WTC11 (cell line): ENCODE measurements at regions of chrX and their contacts with region 1.

Region 1: DNA sequence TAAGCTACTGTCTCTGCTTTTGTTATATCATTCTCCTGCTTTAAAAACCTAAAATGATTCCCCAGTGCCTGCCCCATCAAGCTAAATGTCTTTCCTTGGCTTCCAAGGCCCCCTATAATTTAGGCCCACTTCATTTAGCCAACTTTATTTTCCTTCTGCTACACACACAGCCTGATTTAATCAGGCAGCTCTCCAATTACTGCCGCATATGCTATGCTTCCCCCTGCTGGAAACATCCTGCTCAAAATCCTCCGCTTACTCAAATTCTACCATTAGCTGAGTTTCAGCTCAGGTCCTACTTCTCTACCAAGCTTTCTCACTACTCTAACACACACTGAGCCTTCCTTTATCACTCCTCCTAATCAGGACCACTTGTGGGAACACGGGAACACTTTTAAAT is 17.0 kb downstream of the LAMP2 start:
- DNase-seq: peak; percentile 13
- ATAC-seq: peak; percentile 80
- H3K4me3 Mint-ChIP-seq: no peak overlapping the region
- H3K27ac Mint-ChIP-seq: peak overlapping the region; percentile 82
- H3K4me1 Mint-ChIP-seq: peaks cover 5% of the 10 kb centered on the region
- H3K27me3 Mint-ChIP-seq: no peaks in the 10 kb centered on the region
- CTCF ChIP-seq: no peak

Region 2: DNA sequence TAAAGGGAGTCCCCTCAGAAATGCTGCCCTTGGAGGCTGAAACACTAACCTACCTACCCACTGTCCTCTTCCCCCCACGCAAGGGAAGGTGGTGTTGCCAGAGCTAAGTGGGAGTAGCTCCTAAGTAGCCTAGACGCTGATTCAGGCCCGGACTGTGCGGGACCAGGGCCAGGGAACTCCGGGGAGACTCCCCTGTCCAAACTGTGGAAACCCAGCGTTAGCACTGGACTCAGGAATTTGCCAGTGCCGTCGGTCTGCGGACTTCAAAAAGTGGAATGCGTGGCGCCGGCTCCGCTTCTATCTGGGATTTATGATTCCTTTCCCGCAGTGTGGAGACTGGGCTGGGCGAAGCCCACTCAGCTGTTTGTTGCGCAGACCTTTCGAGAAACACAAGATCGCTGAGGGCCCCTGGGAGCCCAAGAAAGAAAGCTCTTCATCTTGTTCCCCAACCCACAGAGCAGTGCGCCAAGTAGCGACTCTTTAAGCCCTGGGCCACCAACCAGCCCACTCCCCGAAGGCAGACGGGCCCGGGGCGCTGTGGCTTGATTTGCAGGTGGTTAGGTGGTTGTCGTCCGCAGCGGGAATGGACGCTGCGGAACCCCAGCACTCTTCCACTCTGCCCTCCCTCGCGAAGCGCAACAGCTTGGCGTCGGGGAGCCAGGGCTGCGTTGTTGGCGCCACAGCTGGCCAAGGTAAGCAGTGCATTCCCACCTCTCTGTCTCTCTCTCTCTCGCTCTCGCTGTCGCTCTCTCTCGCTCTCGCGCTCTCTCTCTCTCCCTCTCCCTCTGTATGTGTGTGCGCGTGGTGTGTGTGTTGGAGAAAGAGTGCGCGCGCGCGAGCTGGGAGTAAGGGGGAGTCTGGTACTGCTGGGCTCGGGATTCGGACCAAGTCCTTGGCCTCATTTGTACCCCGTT is 142.9 kb before region 1 on chrX:
- CTCF ChIA-PET with region 1: interaction called, 38 read pairs
- POLR2A ChIA-PET with region 1: no interaction called
- DNase-seq: peak; percentile 67
- ATAC-seq: peak; percentile 76
- H3K4me3 Mint-ChIP-seq: peak overlapping the region; percentile 74
- H3K27ac Mint-ChIP-seq: no peak overlapping the region
- H3K4me1 Mint-ChIP-seq: peaks cover 44% of the 10 kb centered on the region
- H3K27me3 Mint-ChIP-seq: peaks cover 98% of the 10 kb centered on the region
- CTCF ChIP-seq: 0 out of 2 replicates have a peak, but pooled peaks have one; percentile 21

Region 3: DNA sequence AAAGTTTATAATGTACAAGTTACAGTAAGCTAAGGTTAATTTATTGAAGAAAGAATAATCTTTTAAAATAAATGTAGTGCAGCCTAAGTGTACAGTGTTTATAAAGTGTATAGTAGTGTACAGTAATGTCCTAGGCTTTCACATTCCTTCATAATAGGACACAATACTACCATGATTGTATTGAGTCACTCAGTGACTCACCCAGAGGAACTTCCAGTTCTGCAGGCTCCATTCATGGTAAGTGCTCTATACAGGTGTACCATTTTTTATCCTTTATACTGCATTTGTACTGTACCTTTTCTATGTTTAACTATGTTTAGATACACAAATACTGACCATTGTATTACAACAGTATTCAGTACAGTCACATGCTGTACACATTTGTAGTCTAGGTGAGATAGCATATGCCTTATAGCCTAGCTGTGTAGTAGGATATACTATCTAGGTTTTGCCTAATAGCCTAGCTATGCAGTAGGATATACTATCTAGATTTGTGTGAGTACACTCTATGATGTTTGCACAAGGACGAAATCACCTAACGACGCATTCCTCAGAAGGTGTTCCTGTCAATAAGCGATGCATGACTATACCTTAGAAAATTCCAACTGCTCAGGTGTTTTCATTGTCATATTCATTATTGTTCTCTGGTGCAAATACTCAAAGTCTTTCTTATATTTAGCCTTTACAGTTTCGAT is 135.4 kb before region 1 on chrX:
- CTCF ChIA-PET with region 1: interaction called, 38 read pairs
- POLR2A ChIA-PET with region 1: no interaction called
- DNase-seq: no peak
- ATAC-seq: no peak
- H3K4me3 Mint-ChIP-seq: no peak overlapping the region
- H3K27ac Mint-ChIP-seq: no peak overlapping the region
- H3K4me1 Mint-ChIP-seq: 0 out of 2 replicates have a peak, but pooled peaks cover 8% of the 10 kb centered on the region
- H3K27me3 Mint-ChIP-seq: peaks cover 37% of the 10 kb centered on the region
- CTCF ChIP-seq: no peak

Region 4: GRCh38 chrX:120380699-120381098 is 71.4 kb before region 1 on chrX:
- CTCF ChIA-PET with region 1: interaction called, 15 read pairs
- POLR2A ChIA-PET with region 1: no interaction called
- DNase-seq: no peak
- ATAC-seq: peak; percentile 84
- H3K4me3 Mint-ChIP-seq: no peak overlapping the region
- H3K27ac Mint-ChIP-seq: no peak overlapping the region
- H3K4me1 Mint-ChIP-seq: peaks cover 20% of the 10 kb centered on the region
- H3K27me3 Mint-ChIP-seq: no peaks in the 10 kb centered on the region
- CTCF ChIP-seq: no peak

Region 5: GRCh38 chrX:120463241-120463640 is 11.1 kb after region 1 on chrX:
- CTCF ChIA-PET with region 1: interaction called, 15 read pairs
- POLR2A ChIA-PET with region 1: no interaction called
- DNase-seq: no peak
- ATAC-seq: no peak
- H3K4me3 Mint-ChIP-seq: no peak overlapping the region
- H3K27ac Mint-ChIP-seq: no peak overlapping the region
- H3K4me1 Mint-ChIP-seq: peaks cover 9% of the 10 kb centered on the region
- H3K27me3 Mint-ChIP-seq: no peaks in the 10 kb centered on the region
- CTCF ChIP-seq: no peak

Region 6: GRCh38 chrX:120485638-120486520 is 33.7 kb after region 1 on chrX:
- CTCF ChIA-PET with region 1: interaction called, 19 read pairs
- POLR2A ChIA-PET with region 1: no interaction called
- DNase-seq: peak; percentile 53
- ATAC-seq: peak; percentile 94
- H3K4me3 Mint-ChIP-seq: peak overlapping the region; percentile 66
- H3K27ac Mint-ChIP-seq: peak overlapping the region; percentile 93
- H3K4me1 Mint-ChIP-seq: no peaks in the 10 kb centered on the region
- H3K27me3 Mint-ChIP-seq: no peaks in the 10 kb centered on the region
- CTCF ChIP-seq: peak; percentile 26; the same call in 1 of the 2 replicates

Region 7: DNA sequence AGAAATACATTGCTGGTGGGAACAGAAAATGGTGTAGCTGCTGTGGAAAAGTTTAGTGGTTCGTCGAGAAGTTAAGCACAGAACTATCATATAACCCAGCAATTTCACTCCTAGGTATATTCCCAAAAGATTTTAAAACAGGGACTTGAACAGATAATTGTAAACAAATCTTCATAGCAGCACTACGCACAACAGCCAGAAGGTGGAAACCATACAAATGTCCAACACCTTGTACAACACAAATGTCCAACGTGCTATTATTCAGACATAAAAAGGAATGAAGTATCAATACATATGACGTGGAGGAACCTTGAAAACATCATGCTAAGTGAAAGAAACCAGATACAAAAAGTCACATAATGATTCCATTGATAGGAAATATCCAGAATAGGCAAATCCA is 70.7 kb after region 1 on chrX:
- CTCF ChIA-PET with region 1: no interaction called
- POLR2A ChIA-PET with region 1: no interaction called
- DNase-seq: no peak
- ATAC-seq: no peak
- H3K4me3 Mint-ChIP-seq: no peak overlapping the region
- H3K27ac Mint-ChIP-seq: no peak overlapping the region
- H3K4me1 Mint-ChIP-seq: no peaks in the 10 kb centered on the region
- H3K27me3 Mint-ChIP-seq: no peaks in the 10 kb centered on the region
- CTCF ChIP-seq: no peak

Region 8: DNA sequence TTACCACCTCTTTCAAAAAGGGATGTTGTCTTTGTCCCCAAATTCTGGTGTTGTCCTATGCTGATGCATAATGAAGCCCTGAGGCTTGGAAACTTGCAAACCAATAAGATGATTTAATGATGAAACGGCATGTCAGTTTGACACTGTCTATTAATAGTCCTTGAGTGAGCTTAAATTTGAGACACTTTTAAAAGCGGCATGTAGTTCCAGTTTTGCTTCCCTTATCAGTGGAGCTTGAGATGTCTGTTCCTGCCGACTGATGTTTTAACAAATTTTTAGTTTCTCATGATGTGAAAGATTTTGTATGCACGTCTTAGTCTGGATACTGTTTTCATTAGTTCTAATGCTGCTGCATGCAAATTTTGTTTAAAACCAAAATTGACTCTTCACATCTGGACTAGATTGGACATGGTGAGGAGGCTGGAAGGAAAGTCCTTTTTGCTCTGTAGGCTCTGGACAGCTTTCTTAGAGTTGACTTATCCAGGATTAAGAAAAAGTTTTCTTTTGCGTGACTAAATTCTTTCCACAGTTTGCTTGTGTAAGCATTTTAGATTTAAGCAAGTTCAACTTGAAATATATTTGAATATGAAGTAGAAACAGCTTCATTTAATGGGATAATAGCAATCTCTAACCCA is 166.0 kb after region 1 on chrX:
- CTCF ChIA-PET with region 1: no interaction called
- POLR2A ChIA-PET with region 1: no interaction called
- DNase-seq: no peak
- ATAC-seq: no peak
- H3K4me3 Mint-ChIP-seq: no peak overlapping the region
- H3K27ac Mint-ChIP-seq: no peak overlapping the region
- H3K4me1 Mint-ChIP-seq: no peaks in the 10 kb centered on the region
- H3K27me3 Mint-ChIP-seq: no peaks in the 10 kb centered on the region
- CTCF ChIP-seq: no peak